ENCODE measurements at regions of chr17 and their contacts with region 1.

Region 1: DNA sequence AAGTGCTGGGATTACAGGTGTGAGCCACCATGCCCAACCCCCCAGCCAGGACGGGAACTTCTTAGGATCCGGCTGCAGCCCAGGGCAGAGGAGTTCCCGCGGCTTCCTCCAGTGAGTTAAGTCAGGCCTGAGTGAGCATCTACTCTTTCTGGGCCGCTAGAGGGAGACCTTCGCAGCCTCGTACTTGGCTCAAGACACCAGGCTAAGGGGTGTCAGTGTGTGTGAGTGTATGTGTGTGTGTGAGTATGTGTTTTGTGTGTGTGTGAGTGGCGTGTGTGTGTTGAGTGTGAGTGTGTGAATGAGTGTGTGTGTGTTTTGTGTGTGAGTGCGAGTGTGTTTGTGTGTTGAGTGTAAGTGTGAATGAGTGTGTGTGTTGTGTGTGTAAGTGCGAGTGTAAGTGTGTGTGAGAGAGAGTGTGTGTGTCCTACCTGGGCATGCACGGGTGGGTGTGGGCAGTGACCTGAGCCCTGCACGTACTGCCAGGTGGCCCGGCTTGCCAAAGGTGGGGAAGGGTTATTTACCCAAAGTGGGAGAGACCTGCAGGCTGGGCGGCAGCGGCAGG is 58.5 kb downstream of the TMEM235 start:
- DNase-seq: peak; percentile 94
- ATAC-seq: peak; percentile 93
- H3K4me3 ChIP-seq: no peak overlapping the region
- H3K27ac ChIP-seq: no peak overlapping the region
- H3K4me1 ChIP-seq: peaks cover 13% of the 10 kb centered on the region
- H3K27me3 ChIP-seq: no peaks in the 10 kb centered on the region
- CTCF ChIP-seq: peak; percentile 91

Region 2: GRCh38 chr17:78313735-78314648 is 24.1 kb after region 1 on chr17:
- CTCF ChIA-PET with region 1: interaction called, 5 read pairs
- POLR2A ChIA-PET with region 1: interaction called, 3 read pairs
- intact Hi-C with region 1: loop called (anchors 1 kb)
- DNase-seq: peak; percentile 99
- ATAC-seq: peak; percentile 62
- H3K4me3 ChIP-seq: peak overlapping the region; percentile 68
- H3K27ac ChIP-seq: peak overlapping the region; percentile 96
- H3K4me1 ChIP-seq: peaks cover 45% of the 10 kb centered on the region
- H3K27me3 ChIP-seq: no peaks in the 10 kb centered on the region
- CTCF ChIP-seq: no peak

Region 3: DNA sequence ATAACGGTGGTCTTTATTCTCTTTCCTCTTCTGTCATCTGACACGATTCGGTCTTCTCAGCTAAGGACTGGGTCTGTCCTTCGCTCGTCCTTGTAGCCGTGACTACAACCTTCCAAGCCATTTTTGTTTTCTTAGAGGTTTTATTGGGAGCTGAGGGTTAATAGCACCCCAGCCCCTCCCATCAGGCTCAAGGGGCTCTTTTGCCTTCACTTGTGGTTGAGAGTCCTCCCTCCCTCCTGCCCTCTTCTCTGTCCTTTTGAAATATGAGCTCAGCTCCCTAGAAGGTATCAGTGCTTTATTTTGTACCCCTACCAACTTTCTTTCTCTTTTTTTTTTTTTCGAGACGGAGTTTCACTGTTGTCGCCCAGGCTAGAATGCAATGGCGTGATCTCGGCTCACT is 45.3 kb after region 1 on chr17:
- CTCF ChIA-PET with region 1: no interaction called
- POLR2A ChIA-PET with region 1: interaction called, 3 read pairs
- intact Hi-C with region 1: loop called (anchors 2 kb)
- DNase-seq: no peak
- ATAC-seq: no peak
- H3K4me3 ChIP-seq: peak overlapping the region; percentile 3; the same call in 1 of the 2 replicates
- H3K27ac ChIP-seq: peak overlapping the region; percentile 96
- H3K4me1 ChIP-seq: peaks cover 86% of the 10 kb centered on the region
- H3K27me3 ChIP-seq: no peaks in the 10 kb centered on the region
- CTCF ChIP-seq: no peak

Region 4: DNA sequence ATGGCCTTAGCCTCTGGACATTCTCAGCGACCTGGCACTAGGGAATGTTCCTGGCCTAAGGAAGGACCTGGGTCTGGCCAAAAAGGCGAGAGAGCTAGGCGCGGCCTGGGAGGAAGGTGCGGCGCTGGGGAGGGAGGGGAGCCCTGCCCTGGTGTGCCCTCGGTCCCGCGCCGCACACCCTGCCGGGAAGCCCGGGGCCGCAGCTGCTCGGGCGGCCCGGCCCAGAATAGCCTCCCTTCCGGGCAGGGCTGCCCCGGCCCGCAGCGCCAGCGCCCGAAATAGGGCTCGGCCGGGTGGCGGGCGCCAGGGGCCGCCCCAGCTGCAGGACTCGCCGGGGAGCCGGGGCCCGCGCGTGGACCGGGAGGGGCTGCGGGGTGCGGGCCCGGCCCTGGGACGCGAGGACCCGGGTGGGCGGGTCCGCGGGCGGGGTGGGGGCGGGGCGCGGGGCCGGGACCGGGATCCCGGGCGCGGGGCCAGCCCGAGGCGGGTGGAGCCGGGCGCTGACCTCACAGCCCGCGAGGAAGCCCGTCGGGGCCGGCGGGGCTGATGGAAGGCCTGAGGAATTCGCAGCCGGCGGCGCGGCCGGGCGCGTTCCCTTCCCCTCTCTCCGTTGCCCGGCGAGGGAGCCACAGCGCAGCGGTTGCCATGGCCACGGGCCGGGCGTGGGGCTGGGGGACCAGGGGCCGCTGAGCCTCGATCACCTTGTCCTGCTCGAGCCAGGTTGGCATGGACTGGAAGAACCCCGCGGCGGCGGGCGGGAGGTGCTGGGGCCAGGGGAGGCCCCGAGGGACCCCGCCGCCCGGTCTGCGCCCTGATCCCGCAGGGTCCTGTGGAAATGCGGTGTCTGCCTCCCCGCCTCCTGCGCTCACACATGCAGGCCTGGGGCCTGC is 51.9 kb after region 1 on chr17:
- CTCF ChIA-PET with region 1: no interaction called
- POLR2A ChIA-PET with region 1: interaction called, 14 read pairs
- intact Hi-C with region 1: no loop called
- DNase-seq: peak; percentile 82
- ATAC-seq: peak; percentile 36
- H3K4me3 ChIP-seq: peak overlapping the region; percentile 60
- H3K27ac ChIP-seq: peak overlapping the region; percentile 97
- H3K4me1 ChIP-seq: peaks cover 75% of the 10 kb centered on the region
- H3K27me3 ChIP-seq: no peaks in the 10 kb centered on the region
- CTCF ChIP-seq: no peak

Region 5: GRCh38 chr17:78378225-78379130 is 88.6 kb after region 1 on chr17 and contains the start of gene PGS1:
- CTCF ChIA-PET with region 1: no interaction called
- POLR2A ChIA-PET with region 1: no interaction called
- intact Hi-C with region 1: no loop called
- DNase-seq: peak; percentile 78
- ATAC-seq: peak; percentile 62
- H3K4me3 ChIP-seq: peak within 1 kb of the TSS; percentile 78
- H3K27ac ChIP-seq: peak within 1 kb of the TSS; percentile 76
- H3K4me1 ChIP-seq: peaks cover 67% of the 10 kb centered on the region
- H3K27me3 ChIP-seq: no peaks in the 10 kb centered on the region
- CTCF ChIP-seq: 0 out of 2 replicates have a peak, but pooled peaks have one; percentile 9
- total RNA-seq, gene PGS1: 40.6 and 47.0 TPM in 2 replicates

Region 6: GRCh38 chr17:78421484-78422266 is 131.8 kb after region 1 on chr17:
- CTCF ChIA-PET with region 1: interaction called, 8 read pairs
- POLR2A ChIA-PET with region 1: no interaction called
- intact Hi-C with region 1: loop called (anchors 1 kb)
- DNase-seq: peak; percentile 87
- ATAC-seq: peak; percentile 91
- H3K4me3 ChIP-seq: no peak overlapping the region
- H3K27ac ChIP-seq: no peak overlapping the region
- H3K4me1 ChIP-seq: no peaks in the 10 kb centered on the region
- H3K27me3 ChIP-seq: no peaks in the 10 kb centered on the region
- CTCF ChIP-seq: peak; percentile 99